ENCODE measurements at regions of chr2 and their contacts with region 1.

Region 1: GRCh38 chr2:159921752-159922404 is 123.9 kb upstream of the CD302 start:
- DNase-seq: peak; percentile 92
- H3K4me3 Mint-ChIP-seq: no peak overlapping the region
- H3K27ac Mint-ChIP-seq: no peak overlapping the region
- H3K4me1 Mint-ChIP-seq: peaks cover 22% of the 10 kb centered on the region
- H3K27me3 Mint-ChIP-seq: peaks cover 27% of the 10 kb centered on the region

Region 2: GRCh38 chr2:159516241-159516766 is 405.6 kb before region 1 on chr2:
- CTCF ChIA-PET with region 1: no interaction called
- intact Hi-C with region 1: loop called (anchors 1 kb)
- DNase-seq: peak; percentile 23
- H3K4me3 Mint-ChIP-seq: peak overlapping the region; percentile 66
- H3K27ac Mint-ChIP-seq: peak overlapping the region; percentile 54
- H3K4me1 Mint-ChIP-seq: peaks cover 17% of the 10 kb centered on the region
- H3K27me3 Mint-ChIP-seq: no peaks in the 10 kb centered on the region

Region 3: GRCh38 chr2:159807183-159808031 is 114.5 kb before region 1 on chr2:
- CTCF ChIA-PET with region 1: no interaction called
- intact Hi-C with region 1: loop called (anchors 2 kb)
- DNase-seq: peak; percentile 43
- H3K4me3 Mint-ChIP-seq: no peak overlapping the region
- H3K27ac Mint-ChIP-seq: no peak overlapping the region
- H3K4me1 Mint-ChIP-seq: peaks cover 6% of the 10 kb centered on the region
- H3K27me3 Mint-ChIP-seq: no peaks in the 10 kb centered on the region

Region 4: GRCh38 chr2:159895258-159896065 is 26.4 kb before region 1 on chr2:
- CTCF ChIA-PET with region 1: interaction called, 10 read pairs
- intact Hi-C with region 1: loop called (anchors 1 kb)
- DNase-seq: peak; percentile 66
- H3K4me3 Mint-ChIP-seq: no peak overlapping the region
- H3K27ac Mint-ChIP-seq: peak overlapping the region; percentile 84
- H3K4me1 Mint-ChIP-seq: peaks cover 91% of the 10 kb centered on the region
- H3K27me3 Mint-ChIP-seq: no peaks in the 10 kb centered on the region

Region 5: DNA sequence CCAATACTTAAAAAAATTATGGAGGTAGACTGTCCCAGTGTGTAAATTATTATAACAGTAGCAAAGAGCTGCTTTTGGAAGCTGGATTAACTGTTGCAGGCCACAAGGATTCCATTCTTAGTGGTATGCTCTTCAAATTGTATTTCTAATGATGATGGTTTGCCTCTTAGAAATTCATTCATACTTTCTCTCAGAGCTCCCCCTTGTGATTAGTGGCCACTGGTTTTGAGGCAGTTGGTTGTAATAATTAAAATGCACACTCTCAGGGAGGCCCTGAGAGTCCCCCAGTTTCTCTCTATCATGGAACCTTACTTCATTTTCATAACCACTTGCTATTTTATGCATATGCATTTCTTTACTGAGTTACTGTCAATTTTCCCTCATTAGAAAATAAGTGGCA is 18.1 kb after region 1 on chr2:
- CTCF ChIA-PET with region 1: interaction called, 6 read pairs
- intact Hi-C with region 1: loop called (anchors 2 kb)
- DNase-seq: no peak
- H3K4me3 Mint-ChIP-seq: no peak overlapping the region
- H3K27ac Mint-ChIP-seq: no peak overlapping the region
- H3K4me1 Mint-ChIP-seq: peaks cover 6% of the 10 kb centered on the region
- H3K27me3 Mint-ChIP-seq: peaks cover 5% of the 10 kb centered on the region

Region 6: DNA sequence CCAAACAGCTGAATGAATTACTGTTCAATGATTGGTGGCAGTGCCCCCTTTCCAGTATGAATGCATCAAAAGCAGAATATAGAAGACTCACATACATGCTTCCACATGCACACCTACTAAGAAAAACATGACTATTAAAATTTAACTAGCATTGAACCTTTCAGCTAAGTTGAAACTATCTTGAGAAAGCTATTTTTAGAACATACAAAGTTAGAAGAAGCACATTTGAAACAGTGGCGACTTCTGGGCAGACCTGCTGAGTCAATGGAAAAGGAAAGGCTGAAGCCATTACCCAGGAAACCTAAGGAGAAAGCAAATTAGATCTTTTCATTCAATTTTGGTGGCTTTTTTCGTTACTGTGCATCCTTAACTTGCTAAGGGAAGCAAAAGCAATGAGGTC is 84.6 kb after region 1 on chr2:
- CTCF ChIA-PET with region 1: no interaction called
- intact Hi-C with region 1: no loop called
- DNase-seq: no peak
- H3K4me3 Mint-ChIP-seq: no peak overlapping the region
- H3K27ac Mint-ChIP-seq: no peak overlapping the region
- H3K4me1 Mint-ChIP-seq: no peaks in the 10 kb centered on the region
- H3K27me3 Mint-ChIP-seq: peaks cover 3% of the 10 kb centered on the region

Measured in activated naive CD4-positive, alpha-beta T cell treated with anti-CD3 and anti-CD28 coated beads for 36 hours (primary cell).